ENCODE measurements at regions of chr7 and their contacts with region 1.

Region 1: GRCh38 chr7:103148994-103149807 is at the start of gene NAPEPLD:
- DNase-seq: peak; percentile 81
- ATAC-seq: peak; percentile 86
- H3K4me3 Mint-ChIP-seq: peak within 1 kb of the TSS; percentile 98
- H3K27ac Mint-ChIP-seq: peak within 1 kb of the TSS; percentile 96
- H3K4me1 Mint-ChIP-seq: peaks cover 40% of the 10 kb centered on the region
- H3K27me3 Mint-ChIP-seq: no peaks in the 10 kb centered on the region
- CTCF ChIP-seq: no peak
- total RNA-seq, gene NAPEPLD: 14.4 and 15.4 TPM in 2 replicates

Region 2: DNA sequence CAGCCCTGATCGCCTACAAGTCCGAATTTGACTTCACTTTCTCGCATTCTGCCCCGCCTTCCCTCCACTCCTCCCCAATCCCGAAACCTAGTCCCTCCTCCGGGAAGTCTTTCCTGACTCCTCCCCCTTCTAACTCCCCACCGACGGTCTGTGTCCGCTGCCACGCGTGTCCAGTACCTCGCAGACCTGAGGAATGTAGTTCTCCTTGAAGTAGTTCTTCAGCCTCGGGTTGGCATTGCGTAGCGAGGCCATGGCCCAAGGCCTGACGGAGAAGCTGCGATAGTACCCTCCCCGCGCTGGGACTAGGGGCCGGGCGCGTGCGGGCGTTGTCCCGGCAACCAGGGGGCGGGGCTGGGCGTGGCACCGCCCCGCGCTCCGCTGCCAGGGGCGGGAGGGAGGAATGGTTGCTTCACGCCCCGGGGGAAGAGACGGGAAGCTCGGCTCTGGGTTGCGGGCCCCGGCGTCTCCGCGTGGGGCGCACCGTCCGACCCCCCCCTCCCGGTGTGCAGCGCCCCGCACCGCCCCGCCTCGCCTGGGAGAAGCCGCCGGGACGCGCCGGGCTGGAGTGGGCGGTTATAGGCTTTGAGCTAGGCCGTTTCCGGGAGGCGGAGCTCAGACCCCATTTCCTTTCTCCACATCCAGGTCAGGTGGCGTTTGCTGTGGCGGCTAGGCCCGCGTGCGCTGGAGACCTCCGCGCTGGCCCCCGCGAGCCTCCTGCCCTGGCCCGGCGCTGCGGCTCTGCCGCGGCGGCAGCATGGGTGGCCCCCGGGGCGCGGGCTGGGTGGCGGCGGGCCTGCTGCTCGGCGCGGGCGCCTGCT is 74.5 kb before region 1 on chr7 and contains the starts of genes ARMC10 and FBXL13:
- CTCF ChIA-PET with region 1: no interaction called
- POLR2A ChIA-PET with region 1: interaction called, 10 read pairs
- intact Hi-C with region 1: loop called (anchors 1 kb)
- DNase-seq: peak; percentile 95
- ATAC-seq: peak; percentile 85
- H3K4me3 Mint-ChIP-seq: peak within 1 kb of the TSS; percentile 94
- H3K27ac Mint-ChIP-seq: peak within 1 kb of the TSS; percentile 95
- H3K4me1 Mint-ChIP-seq: peaks cover 41% of the 10 kb centered on the region
- H3K27me3 Mint-ChIP-seq: no peaks in the 10 kb centered on the region
- CTCF ChIP-seq: no peak
- total RNA-seq, gene ARMC10: 24.9 and 26.7 TPM in 2 replicates
- total RNA-seq, gene FBXL13: 2.9 and 3.4 TPM in 2 replicates

Measured in activated B cell treated with CpG ODN at 0.5 μM for 24 hours (primary cell).